Kidney (tissue), 22 donors: ENCODE measurements at regions of chr3 and their contacts with region 1.

Region 1: DNA sequence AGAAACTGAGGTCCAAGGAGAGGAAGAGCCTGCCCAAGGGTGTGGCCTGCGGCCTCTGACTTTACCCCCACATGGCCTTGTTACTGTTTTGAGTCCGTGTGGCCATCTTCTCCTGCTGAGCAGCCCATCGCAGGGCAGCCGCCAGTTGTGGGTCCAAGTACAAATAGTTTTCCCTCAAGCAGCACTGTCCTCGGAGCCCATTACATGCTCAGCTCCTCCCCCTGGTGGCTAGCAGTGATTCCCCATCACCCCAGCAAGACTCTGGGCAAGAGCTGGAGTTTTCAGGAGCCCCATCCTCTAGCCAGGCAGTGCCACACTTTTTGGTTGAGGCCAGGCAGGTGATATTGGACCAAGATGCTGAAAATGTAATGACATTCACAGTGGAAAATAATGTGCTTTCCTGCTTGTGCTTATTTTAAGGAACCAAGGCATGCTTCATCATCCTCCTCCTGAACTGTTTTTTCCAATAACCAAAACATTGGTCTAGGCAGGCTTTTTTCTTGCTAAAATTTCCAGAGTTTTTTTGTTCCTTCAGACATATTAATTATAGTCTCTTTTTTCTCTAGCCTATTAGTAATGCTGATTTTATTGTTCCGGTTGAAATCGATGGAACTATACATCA is 23.2 kb upstream of the VILL start:
- DNase-seq: peak; percentile 75 to 84 (median 81)
- H3K4me3 ChIP-seq: no peak overlapping the region
- H3K27ac ChIP-seq: no peak overlapping the region
- H3K4me1 ChIP-seq: peaks cover 11 to 40% (median 37%) of the 10 kb centered on the region in 3 donors
- H3K27me3 ChIP-seq: no peaks in the 10 kb centered on the region
- CTCF ChIP-seq: peak; percentile 77

Region 2: GRCh38 chr3:37571270-37571669 is 396.1 kb before region 1 on chr3:
- intact Hi-C with region 1: no loop called
- DNase-seq: no peak
- H3K4me3 ChIP-seq: no peak overlapping the region
- H3K27ac ChIP-seq: no peak overlapping the region
- H3K4me1 ChIP-seq: peaks cover 0 to 5% (median 0%) of the 10 kb centered on the region in 3 donors
- H3K27me3 ChIP-seq: no peaks in the 10 kb centered on the region
- CTCF ChIP-seq: no peak

Region 3: DNA sequence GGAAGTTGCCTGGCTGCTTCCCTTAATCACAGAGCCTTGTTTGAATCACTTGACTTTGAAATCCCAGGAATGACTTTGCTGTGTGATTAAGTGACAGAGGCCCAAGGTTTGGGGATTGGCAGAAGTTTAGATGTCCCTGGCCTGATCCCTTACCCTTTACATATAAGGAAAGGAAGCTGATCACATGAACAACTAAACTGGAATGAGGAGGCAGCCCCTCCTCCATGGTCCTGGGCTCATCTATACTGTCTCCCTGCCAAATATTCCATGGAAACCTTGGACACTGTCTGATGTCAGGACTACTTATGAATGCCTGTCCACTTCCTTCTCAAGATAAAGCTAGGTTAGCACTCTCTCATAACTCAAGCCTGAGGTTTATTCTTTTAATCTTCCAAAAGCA is 287.0 kb before region 1 on chr3:
- intact Hi-C with region 1: no loop called
- DNase-seq: peak in 1 of 5 donors; percentile 77
- H3K4me3 ChIP-seq: no peak overlapping the region
- H3K27ac ChIP-seq: no peak overlapping the region
- H3K4me1 ChIP-seq: peaks cover 0 to 13% (median 0%) of the 10 kb centered on the region in 3 donors
- H3K27me3 ChIP-seq: no peaks in the 10 kb centered on the region
- CTCF ChIP-seq: no peak

Region 4: DNA sequence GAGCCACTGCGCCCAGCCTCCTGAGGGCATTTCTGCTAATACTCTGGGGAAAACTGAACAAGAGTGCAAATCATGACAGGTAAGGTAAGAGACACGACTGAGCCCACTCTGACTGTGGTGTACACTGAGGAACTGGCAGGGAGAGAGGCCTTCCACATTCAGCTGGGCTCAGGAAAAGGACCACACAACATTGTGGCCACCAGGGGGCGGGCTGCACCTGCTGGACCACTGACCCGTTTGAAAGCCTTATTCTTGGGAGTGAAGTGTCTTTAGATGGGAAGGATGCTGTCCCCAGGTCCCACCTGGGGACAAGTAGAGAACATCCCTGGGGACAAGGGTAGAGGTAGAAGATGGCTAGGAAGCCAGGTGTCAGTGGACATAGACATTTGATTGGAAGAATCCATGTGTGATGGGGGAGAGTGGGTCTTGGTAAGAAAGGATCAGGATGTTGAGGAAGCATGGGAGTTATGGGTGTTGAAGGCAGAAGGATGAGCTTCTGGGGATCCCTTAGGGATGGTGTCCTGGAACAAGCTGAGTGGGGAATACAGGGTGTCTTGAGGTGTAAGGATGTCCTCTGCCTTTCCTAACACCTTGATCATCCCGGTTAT is 111.9 kb before region 1 on chr3:
- intact Hi-C with region 1: loop called (anchors 10 kb)
- DNase-seq: peak; percentile 83 to 91 (median 90)
- H3K4me3 ChIP-seq: no peak overlapping the region
- H3K27ac ChIP-seq: no peak overlapping the region
- H3K4me1 ChIP-seq: peaks cover 3 to 8% (median 8%) of the 10 kb centered on the region in 3 donors
- H3K27me3 ChIP-seq: no peaks in the 10 kb centered on the region
- CTCF ChIP-seq: peak; percentile 98

Region 5: GRCh38 chr3:38054291-38055001 is 87.1 kb after region 1 on chr3:
- intact Hi-C with region 1: no loop called
- DNase-seq: no peak
- H3K4me3 ChIP-seq: no peak overlapping the region
- H3K27ac ChIP-seq: no peak overlapping the region
- H3K4me1 ChIP-seq: no peaks in the 10 kb centered on the region
- H3K27me3 ChIP-seq: no peaks in the 10 kb centered on the region
- CTCF ChIP-seq: no peak

Region 6: DNA sequence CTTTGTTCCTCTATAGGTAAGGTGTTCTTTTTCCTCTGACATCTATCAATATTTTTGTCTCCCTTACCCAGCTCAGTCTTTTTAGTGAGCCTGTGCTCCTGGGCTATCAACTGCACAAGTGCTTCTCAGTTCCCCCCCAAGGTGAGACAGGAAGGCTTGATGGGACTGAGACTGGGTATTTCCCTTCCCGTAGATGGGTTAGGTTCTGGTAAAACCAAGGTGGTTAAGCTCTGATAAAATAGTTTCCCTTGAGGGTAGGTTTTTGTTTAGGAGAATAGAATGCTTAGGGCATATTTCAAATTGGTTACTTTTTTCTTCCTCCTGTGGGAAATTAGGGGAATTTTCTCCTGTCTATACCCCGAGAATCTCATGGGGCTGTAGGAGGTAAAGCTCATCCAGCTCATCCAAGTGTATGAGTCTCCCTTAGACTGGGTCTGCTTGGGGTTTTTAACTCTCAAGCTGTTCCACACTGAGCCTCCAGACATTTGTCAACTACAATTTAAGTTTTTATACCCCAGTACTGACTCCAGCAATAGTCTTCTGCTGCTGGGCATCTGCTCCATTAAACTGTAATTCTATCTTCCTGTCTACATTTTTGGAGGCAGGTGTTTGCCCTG is 242.9 kb after region 1 on chr3:
- intact Hi-C with region 1: no loop called
- DNase-seq: no peak
- H3K4me3 ChIP-seq: no peak overlapping the region
- H3K27ac ChIP-seq: no peak overlapping the region
- H3K4me1 ChIP-seq: no peaks in the 10 kb centered on the region
- H3K27me3 ChIP-seq: no peaks in the 10 kb centered on the region
- CTCF ChIP-seq: no peak